ENCODE measurements at regions of chr10 and their contacts with region 1.

Region 1: DNA sequence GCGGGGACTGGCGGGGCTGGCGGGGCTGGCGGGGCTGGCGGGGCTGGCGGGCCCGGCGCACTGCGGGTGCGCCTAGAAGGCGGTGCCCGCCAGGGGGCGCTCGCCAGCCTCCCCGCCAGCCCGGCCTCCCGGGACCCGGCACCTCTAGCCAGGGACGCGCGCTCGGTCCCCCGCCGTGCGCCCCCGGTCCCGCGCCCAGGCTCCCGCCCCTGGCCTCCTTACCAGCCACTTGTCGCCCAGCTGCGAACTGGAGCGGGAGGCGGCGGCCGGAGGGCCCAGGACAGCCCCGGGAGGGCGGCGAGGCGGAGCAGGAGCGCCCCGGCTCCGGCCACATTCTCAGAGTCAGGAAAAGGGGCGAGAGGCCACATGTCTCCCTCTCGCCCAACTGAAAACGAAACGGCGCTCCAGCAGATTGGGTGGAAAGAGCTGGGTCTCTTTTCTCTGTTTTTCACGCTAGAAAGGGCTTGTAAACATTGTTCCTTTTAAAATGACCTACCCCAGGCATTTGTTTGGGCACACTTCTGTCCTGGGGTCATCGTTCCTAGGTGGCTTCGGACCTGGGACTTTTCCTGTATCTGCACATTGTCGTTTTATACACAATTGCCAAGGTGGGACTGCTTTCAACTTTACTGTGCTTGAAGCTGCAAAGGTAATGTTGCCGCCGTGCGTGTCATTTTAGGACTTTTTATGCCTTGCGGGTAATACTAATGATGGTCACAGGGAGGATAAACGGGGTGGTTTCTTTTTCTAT is 378 bp upstream of the PRKCQ start:
- DNase-seq: peak; percentile 55
- H3K4me3 Mint-ChIP-seq: peak overlapping the region; percentile 81
- H3K27ac Mint-ChIP-seq: peak overlapping the region; percentile 49
- H3K4me1 Mint-ChIP-seq: no peaks in the 10 kb centered on the region
- H3K27me3 Mint-ChIP-seq: peaks cover 33% of the 10 kb centered on the region
- CTCF ChIP-seq: peak; percentile 60

Region 2: GRCh38 chr10:6416892-6417512 is 163.5 kb before region 1 on chr10:
- CTCF ChIA-PET with region 1: no interaction called
- POLR2A ChIA-PET with region 1: no interaction called
- intact Hi-C with region 1: loop called (anchors 1 kb)
- DNase-seq: peak; percentile 58
- H3K4me3 Mint-ChIP-seq: no peak overlapping the region
- H3K27ac Mint-ChIP-seq: no peak overlapping the region
- H3K4me1 Mint-ChIP-seq: no peaks in the 10 kb centered on the region
- H3K27me3 Mint-ChIP-seq: peaks cover 14% of the 10 kb centered on the region
- CTCF ChIP-seq: peak; percentile 75

Region 3: DNA sequence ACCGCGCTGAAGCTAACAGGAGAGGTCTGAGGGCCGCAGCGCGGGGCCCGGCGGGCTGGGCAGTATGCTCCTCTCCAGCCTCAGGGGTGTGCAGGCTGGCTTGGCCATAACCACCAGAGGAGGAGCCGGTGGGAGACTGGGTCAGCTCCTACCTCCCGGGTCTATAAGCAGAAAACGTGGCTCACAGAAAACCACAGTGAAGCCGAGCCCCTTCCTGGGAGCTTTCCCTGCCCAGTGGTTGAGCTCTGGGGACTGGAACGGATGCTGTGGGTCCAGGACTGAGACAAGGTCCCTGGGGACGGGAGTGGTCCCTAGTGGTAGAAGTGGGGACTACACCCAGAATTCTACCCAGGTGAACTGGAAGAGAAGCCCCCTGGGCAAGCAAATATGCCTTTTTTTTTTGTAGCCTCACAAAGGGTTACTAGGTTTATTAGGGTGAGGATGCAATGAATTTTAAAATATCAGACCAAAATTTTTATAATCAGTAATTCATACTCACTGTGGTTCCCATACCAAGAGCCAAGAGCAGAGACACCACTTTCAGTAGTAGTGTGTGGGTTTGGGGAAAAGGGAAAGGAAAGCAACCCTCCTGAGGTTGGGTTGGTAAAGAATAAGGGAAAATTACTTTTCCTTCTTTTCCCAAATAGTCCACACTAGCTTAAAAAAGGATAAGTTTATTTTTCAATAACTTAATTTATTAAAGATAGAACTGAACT is 67.5 kb after region 1 on chr10:
- CTCF ChIA-PET with region 1: interaction called, 5 read pairs
- POLR2A ChIA-PET with region 1: no interaction called
- intact Hi-C with region 1: loop called (anchors 1 kb)
- DNase-seq: peak; percentile 59
- H3K4me3 Mint-ChIP-seq: no peak overlapping the region
- H3K27ac Mint-ChIP-seq: no peak overlapping the region
- H3K4me1 Mint-ChIP-seq: no peaks in the 10 kb centered on the region
- H3K27me3 Mint-ChIP-seq: peaks cover 17% of the 10 kb centered on the region
- CTCF ChIP-seq: peak; percentile 82